ENCODE measurements at regions of chr20 and their contacts with region 1.

Region 1: GRCh38 chr20:57856658-57857057 is 146.8 kb upstream of the PMEPA1 start:
- DNase-seq: no peak
- ATAC-seq: no peak

Region 2: DNA sequence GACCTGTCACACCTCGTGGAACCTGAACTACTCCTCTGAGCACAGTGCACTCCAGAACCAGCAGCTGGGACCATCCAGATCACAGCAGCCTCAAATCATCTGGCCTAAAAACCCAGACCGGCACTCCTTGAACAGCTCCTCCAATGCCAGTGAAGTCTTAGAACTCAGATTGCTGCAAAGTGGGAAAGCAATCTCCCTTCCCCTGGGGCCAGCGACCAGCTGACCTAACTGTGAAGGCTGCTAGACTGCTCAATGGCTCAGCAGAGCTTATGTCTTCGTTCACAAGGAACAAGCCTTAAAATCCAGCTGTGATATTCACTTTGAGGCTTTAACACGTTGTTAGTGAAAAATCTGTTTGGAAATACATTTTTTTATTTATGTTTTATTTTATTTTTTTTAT is 128.6 kb after region 1 on chr20:
- intact Hi-C with region 1: loop called (anchors 10 kb)
- DNase-seq: no peak
- ATAC-seq: peak; percentile 58